ENCODE measurements at regions of chr3 and their contacts with region 1.

Region 1: DNA sequence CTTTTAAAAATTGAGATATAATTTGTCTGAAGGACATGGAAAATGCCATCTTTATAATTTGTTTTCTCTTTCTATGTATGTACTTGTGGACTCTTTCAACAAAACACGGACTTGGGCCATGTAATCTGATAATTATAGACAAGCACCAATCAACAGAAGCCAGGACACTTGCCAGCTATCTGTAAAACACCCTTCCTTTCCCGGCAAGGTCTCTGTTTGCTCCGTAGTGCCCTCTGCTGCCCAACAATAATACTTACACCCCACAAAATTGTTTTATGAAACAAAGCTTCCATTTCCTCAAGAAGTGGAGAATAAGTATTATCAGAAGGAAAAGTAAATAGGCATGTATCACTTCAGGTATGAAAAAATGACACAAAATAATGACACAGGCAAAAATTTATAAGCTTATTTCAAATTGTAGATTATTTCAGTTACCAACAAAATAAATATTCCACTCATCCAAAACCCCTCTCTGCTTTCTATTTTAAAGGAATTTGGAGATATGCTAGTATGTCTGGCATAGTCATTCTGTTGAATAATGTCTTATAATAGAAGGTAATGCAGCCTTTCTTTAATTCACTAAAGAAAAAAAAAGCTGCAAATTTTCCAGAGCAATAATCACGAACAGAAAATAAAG is 32.8 kb downstream of the MYH15 start:
- DNase-seq: peak; percentile 49
- H3K4me3 ChIP-seq: no peak overlapping the region
- H3K27ac ChIP-seq: no peak overlapping the region
- H3K27me3 ChIP-seq: no peaks in the 10 kb centered on the region
- CTCF ChIP-seq: peak; percentile 81

Region 2: DNA sequence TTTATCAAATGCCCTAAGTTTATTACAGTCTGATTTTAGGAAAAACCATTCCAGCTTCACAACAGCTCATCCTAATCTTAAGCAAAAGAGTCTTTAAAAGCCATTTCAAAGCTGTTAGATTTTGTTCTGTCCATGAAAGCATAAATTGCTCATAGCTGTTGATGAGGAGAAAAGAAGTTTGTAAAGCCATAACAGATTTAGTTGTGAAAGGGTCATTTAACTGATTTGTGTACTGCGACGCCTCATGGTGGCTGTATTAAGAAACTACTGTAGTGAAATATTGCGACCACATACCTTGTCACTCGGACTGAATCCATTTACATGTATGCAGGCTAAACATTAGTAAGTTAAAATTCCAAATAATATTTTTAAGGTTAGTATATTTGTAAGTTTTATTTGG is 934.0 kb before region 1 on chr3:
- CTCF ChIA-PET with region 1: no interaction called
- POLR2A ChIA-PET with region 1: no interaction called
- DNase-seq: no peak
- H3K4me3 ChIP-seq: no peak overlapping the region
- H3K27ac ChIP-seq: no peak overlapping the region
- H3K27me3 ChIP-seq: no peaks in the 10 kb centered on the region
- CTCF ChIP-seq: no peak

Region 3: GRCh38 chr3:107676469-107677309 is 800.9 kb before region 1 on chr3:
- CTCF ChIA-PET with region 1: interaction called, 16 read pairs
- POLR2A ChIA-PET with region 1: no interaction called
- DNase-seq: no peak
- H3K4me3 ChIP-seq: no peak overlapping the region
- H3K27ac ChIP-seq: no peak overlapping the region
- H3K27me3 ChIP-seq: no peaks in the 10 kb centered on the region
- CTCF ChIP-seq: peak; percentile 56

Region 4: GRCh38 chr3:107927361-107928083 is 550.1 kb before region 1 on chr3:
- CTCF ChIA-PET with region 1: interaction called, 20 read pairs
- POLR2A ChIA-PET with region 1: no interaction called
- DNase-seq: peak; percentile 18
- H3K4me3 ChIP-seq: peak overlapping the region; percentile 66
- H3K27ac ChIP-seq: no peak overlapping the region
- H3K27me3 ChIP-seq: no peaks in the 10 kb centered on the region
- CTCF ChIP-seq: peak; percentile 93

Region 5: GRCh38 chr3:108221911-108222852 is 255.4 kb before region 1 on chr3 and contains the start of gene IFT57:
- CTCF ChIA-PET with region 1: interaction called, 14 read pairs
- POLR2A ChIA-PET with region 1: no interaction called
- DNase-seq: peak; percentile 93
- H3K4me3 ChIP-seq: peak within 1 kb of the TSS; percentile 77
- H3K27ac ChIP-seq: peak within 1 kb of the TSS; percentile 71
- H3K27me3 ChIP-seq: no peaks in the 10 kb centered on the region
- CTCF ChIP-seq: no peak
- polyA plus RNA-seq, gene IFT57: 62.6 and 84.0 TPM in 2 replicates

Region 6: GRCh38 chr3:108342837-108343478 is 134.7 kb before region 1 on chr3:
- CTCF ChIA-PET with region 1: no interaction called
- POLR2A ChIA-PET with region 1: no interaction called
- DNase-seq: no peak
- H3K4me3 ChIP-seq: no peak overlapping the region
- H3K27ac ChIP-seq: no peak overlapping the region
- H3K27me3 ChIP-seq: no peaks in the 10 kb centered on the region
- CTCF ChIP-seq: no peak

Region 7: GRCh38 chr3:108357042-108357441 is 120.6 kb before region 1 on chr3:
- CTCF ChIA-PET with region 1: no interaction called
- POLR2A ChIA-PET with region 1: no interaction called
- DNase-seq: no peak
- H3K4me3 ChIP-seq: no peak overlapping the region
- H3K27ac ChIP-seq: no peak overlapping the region
- H3K27me3 ChIP-seq: no peaks in the 10 kb centered on the region
- CTCF ChIP-seq: no peak

Region 8: DNA sequence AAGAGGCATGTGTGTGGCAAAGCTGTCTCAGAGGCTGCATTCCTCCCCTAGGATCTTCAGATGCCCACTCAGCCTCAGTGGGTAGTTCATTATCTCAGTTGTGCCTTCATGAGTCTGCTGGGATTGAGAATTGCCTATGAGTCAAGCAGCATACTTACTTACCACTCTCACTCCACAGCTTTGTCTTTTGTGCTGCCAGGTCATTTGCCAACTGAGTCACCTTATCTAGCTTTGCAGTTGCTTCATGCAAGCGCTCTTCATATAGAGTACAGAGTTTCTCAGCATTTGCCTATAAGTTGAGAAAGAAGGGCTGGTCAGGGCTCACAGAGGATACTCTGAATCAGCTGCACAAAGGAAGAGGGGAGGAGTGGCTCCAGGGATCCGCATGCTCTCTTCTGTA is 56.7 kb before region 1 on chr3:
- CTCF ChIA-PET with region 1: interaction called, 11 read pairs
- POLR2A ChIA-PET with region 1: no interaction called
- DNase-seq: peak; percentile 57
- H3K4me3 ChIP-seq: no peak overlapping the region
- H3K27ac ChIP-seq: no peak overlapping the region
- H3K27me3 ChIP-seq: no peaks in the 10 kb centered on the region
- CTCF ChIP-seq: no peak

Region 9: GRCh38 chr3:108489771-108490170 is 12.1 kb after region 1 on chr3:
- CTCF ChIA-PET with region 1: interaction called, 83 read pairs
- POLR2A ChIA-PET with region 1: no interaction called
- DNase-seq: no peak
- H3K4me3 ChIP-seq: no peak overlapping the region
- H3K27ac ChIP-seq: no peak overlapping the region
- H3K27me3 ChIP-seq: no peaks in the 10 kb centered on the region
- CTCF ChIP-seq: peak; percentile 74

Region 10: DNA sequence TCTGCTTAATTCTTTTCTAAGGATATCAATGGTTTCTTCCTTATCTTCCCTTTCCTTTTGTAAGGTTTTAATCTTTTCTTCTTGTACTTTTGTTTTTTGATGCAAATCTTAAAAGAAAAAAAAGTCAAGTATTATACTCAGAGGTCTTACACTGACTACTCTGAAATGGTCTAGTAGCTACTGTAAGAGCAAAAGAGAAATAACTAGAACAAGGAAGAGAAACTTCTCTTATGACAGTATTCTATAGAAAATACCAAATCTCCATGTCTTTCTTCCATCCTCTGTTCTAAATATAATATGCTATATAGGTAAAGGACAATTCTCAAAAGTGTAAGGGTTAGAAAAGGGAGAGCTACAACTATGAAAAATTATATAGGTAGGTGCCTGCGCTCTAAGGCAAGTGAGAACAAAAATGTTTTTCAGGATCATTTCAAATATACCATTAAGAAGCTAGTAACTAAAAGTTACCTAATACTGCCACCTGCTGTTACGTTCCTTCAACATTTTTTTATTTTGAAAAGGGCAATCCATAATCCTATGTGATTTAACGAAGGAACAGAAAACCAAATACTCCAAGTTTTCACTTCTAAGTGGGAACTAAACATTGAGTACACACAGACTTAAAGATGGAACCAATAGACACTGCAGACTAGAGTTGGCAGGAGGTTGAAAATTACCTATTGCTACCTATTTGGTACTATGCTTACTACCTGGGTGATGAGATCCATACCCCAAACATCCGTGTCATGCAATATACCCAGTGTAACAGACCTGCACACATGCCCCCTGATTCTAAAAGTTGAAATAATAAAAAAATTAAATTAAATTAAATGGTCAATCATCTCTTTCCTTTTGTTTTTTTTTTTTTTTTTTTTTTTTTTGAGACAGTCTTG is 74.9 kb after region 1 on chr3:
- CTCF ChIA-PET with region 1: interaction called, 23 read pairs
- POLR2A ChIA-PET with region 1: no interaction called
- DNase-seq: peak; percentile 4
- H3K4me3 ChIP-seq: no peak overlapping the region
- H3K27ac ChIP-seq: no peak overlapping the region
- H3K27me3 ChIP-seq: no peaks in the 10 kb centered on the region
- CTCF ChIP-seq: peak; percentile 53

Region 11: DNA sequence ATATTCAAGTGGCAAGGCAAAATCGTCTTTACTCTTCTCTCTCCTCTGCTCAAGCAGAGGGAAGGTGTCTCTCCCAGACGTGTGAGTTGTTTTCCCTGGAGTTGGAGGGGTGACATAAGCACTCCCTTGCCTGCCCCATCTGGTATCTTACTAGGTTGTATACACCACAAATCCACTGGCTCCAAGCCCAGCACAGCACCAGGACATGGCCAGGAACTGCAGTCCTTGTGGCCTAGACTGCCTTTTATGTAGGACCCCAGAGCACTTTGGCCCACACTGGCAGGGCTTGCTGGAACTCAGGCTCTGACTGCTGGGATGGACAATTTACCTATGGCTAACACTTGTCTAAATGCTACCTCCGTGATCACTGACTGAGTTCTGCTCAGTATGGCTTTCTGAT is 145.9 kb after region 1 on chr3:
- CTCF ChIA-PET with region 1: no interaction called
- POLR2A ChIA-PET with region 1: no interaction called
- DNase-seq: no peak
- H3K4me3 ChIP-seq: no peak overlapping the region
- H3K27ac ChIP-seq: no peak overlapping the region
- H3K27me3 ChIP-seq: no peaks in the 10 kb centered on the region
- CTCF ChIP-seq: no peak